Ovary (tissue), 10 donors: ENCODE measurements at regions of chr5 and their contacts with region 1.

Region 1: DNA sequence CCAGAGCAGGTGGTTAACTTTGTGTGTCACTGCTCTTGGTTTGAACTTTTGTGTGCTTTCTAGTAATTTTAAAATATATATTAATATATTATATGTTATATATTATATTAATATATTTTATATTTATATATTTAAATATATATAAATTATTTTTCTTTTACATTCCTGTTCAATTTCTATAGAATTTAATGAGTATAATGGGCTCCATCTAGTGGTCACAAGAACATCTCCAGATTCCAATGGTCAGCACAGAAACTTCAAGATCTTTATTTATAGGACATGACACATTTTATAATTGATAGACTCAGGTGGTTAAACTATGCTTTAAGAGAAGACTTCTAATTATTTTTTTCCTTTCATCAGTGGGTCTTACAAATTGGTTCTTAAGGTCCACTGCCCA is 39.1 kb downstream of the COL23A1 start:
- DNase-seq: no peak
- H3K4me3 ChIP-seq: no peak overlapping the region
- H3K27ac ChIP-seq: no peak overlapping the region
- H3K4me1 ChIP-seq: no peaks in the 10 kb centered on the region
- H3K27me3 ChIP-seq: no peaks in the 10 kb centered on the region
- CTCF ChIP-seq: no peak
- EP300 ChIP-seq: no peak
- POLR2A ChIP-seq: no peak

Region 2: GRCh38 chr5:178249191-178249989 is 301.7 kb before region 1 on chr5:
- intact Hi-C with region 1: no loop called
- DNase-seq: no peak
- H3K4me3 ChIP-seq: no peak overlapping the region
- H3K27ac ChIP-seq: no peak overlapping the region
- H3K4me1 ChIP-seq: no peaks in the 10 kb centered on the region
- H3K27me3 ChIP-seq: no peaks in the 10 kb centered on the region
- CTCF ChIP-seq: no peak
- EP300 ChIP-seq: no peak
- POLR2A ChIP-seq: no peak

Region 3: GRCh38 chr5:178279725-178280438 is 271.2 kb before region 1 on chr5:
- intact Hi-C with region 1: loop called (anchors 5 to 10 kb)
- DNase-seq: peak; percentile 68 to 94 (median 78)
- H3K4me3 ChIP-seq: no peak overlapping the region
- H3K27ac ChIP-seq: no peak overlapping the region
- H3K4me1 ChIP-seq: no peaks in the 10 kb centered on the region
- H3K27me3 ChIP-seq: no peaks in the 10 kb centered on the region
- CTCF ChIP-seq: peak in 2 of 3 donors; percentile 45 to 68
- EP300 ChIP-seq: no peak
- POLR2A ChIP-seq: no peak

Region 4: GRCh38 chr5:178515776-178516503 is 35.1 kb before region 1 on chr5:
- intact Hi-C with region 1: loop called in 1 of 4 experiments (anchors 2 kb)
- DNase-seq: no peak
- H3K4me3 ChIP-seq: no peak overlapping the region
- H3K27ac ChIP-seq: no peak overlapping the region
- H3K4me1 ChIP-seq: no peaks in the 10 kb centered on the region
- H3K27me3 ChIP-seq: no peaks in the 10 kb centered on the region
- CTCF ChIP-seq: no peak
- EP300 ChIP-seq: no peak
- POLR2A ChIP-seq: no peak